ENCODE measurements at regions of chr2 and their contacts with region 1.

Region 1: GRCh38 chr2:105797298-105797819 is 52.6 kb downstream of the NCK2 start:
- DNase-seq: peak in 2 of 3 donors; percentile 38 to 43
- H3K4me3 ChIP-seq: peak overlapping the region in 1 of 3 experiments; percentile 58
- H3K4me3 Mint-ChIP-seq: peak overlapping the region in 1 of 2 donors; percentile 56
- H3K27ac ChIP-seq: peak overlapping the region; percentile 56 to 90
- H3K27ac Mint-ChIP-seq: peak overlapping the region; percentile 55 to 98 (median 83)
- H3K4me1 ChIP-seq: peaks cover 75 to 77% of the 10 kb centered on the region in 2 donors
- H3K4me1 Mint-ChIP-seq: peaks cover 85% of the 10 kb centered on the region
- H3K27me3 ChIP-seq: no peaks in the 10 kb centered on the region
- H3K27me3 Mint-ChIP-seq: no peaks in the 10 kb centered on the region
- CTCF ChIP-seq: no peak

Region 2: DNA sequence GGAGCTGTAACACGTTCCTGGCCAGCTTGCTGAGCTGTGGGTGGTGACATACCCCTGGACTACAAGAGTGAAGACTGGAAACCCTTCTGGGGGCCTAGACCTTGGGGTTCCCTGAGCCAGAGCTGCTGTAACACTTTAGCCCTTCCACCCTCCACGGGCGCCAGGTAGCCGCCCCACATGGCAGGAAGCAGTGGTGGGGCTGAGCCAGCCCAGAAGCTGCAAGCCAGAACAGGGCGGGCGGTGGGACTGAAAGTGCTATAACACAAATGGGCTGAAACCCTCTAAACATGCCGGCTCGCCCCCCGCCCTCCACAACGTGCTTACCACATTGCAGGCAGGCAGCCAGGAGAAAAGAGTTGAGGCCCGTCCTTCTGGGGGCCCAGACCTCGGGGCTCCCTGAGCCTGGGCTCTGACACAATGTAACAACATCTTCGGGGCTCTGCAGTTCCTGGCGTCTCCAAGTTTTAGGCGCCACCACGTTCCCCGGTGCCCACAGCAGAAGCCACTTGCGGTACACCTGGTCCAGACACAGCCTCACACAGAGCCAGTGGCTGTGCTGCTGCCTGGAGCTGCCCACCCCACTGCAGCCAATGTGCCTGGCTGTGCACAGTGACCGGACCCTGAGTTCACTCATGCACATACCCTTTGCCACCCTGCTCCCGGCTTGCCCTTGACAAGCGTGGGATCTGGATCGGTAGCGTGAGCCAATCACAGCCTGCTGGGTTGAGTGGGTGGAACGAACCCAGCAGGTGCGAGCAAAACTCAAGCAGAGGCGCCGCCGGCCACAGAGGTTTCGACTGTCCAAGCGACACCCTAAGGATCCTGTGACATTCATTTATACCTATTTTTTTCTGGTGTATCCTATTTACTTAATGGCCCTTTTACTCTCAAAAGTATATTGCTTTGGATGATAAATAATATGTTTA is 271.1 kb before region 1 on chr2:
- intact Hi-C with region 1: no loop called
- DNase-seq: no peak
- H3K4me3 ChIP-seq: no peak overlapping the region
- H3K4me3 Mint-ChIP-seq: no peak overlapping the region
- H3K27ac ChIP-seq: no peak overlapping the region
- H3K27ac Mint-ChIP-seq: no peak overlapping the region
- H3K4me1 ChIP-seq: no peaks in the 10 kb centered on the region
- H3K4me1 Mint-ChIP-seq: no peaks in the 10 kb centered on the region
- H3K27me3 ChIP-seq: no peaks in the 10 kb centered on the region
- H3K27me3 Mint-ChIP-seq: peaks cover 1 to 3% (median 1%) of the 10 kb centered on the region in 3 donors
- CTCF ChIP-seq: no peak

Region 3: DNA sequence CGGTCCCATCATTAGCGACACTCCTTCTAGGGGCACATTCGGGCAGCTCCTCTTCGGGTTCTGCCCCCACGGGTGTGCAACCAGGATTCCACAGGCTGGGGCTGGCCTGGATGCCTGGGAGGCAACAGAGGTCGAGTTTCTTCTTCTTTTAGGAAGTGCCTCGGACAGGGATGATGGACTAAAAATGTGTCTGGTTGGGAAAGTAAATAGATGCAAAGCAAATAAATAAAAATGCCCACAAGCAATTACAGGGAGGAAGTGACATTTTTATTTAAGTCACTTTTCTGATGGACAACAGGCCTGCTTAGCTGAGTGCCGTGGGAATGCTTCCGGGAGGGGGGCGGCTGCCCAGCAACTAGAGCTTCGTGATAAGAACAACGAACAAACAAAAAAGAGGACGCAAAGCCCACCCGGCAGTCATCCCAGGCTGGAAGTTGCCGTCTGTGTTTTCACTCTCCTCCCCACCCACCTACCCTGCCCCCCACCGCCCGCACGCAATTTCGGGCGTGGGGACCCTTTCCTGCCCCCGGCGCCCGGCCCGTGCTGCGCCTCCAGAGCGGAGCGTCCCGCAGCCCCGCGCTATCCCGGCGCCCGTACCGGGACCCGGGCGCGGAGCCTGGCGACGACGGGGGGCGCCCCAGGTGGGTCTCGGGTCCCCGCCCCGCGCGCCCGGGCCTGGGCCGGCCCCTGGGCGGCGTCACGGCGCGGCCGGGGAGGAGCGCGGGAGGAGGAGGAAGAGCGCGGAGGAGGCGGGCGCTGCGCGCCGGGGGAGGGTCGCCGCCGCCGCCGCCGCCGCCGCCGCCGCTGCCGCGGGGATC is 53.1 kb before region 1 on chr2:
- intact Hi-C with region 1: loop called in 1 of 2 experiments (anchors 5 kb)
- DNase-seq: peak; percentile 28 to 43 (median 32)
- H3K4me3 ChIP-seq: peak overlapping the region; percentile 47 to 74 (median 56)
- H3K4me3 Mint-ChIP-seq: peak overlapping the region; percentile 90 to 94
- H3K27ac ChIP-seq: peak overlapping the region in 1 of 2 donors; percentile 65
- H3K27ac Mint-ChIP-seq: peak overlapping the region; percentile 41 to 88 (median 72)
- H3K4me1 ChIP-seq: peaks cover 20 to 29% of the 10 kb centered on the region in 2 donors
- H3K4me1 Mint-ChIP-seq: peaks cover 33% of the 10 kb centered on the region
- H3K27me3 ChIP-seq: no peaks in the 10 kb centered on the region
- H3K27me3 Mint-ChIP-seq: peaks cover 3 to 5% (median 3%) of the 10 kb centered on the region in 3 donors
- CTCF ChIP-seq: no peak

Region 4: DNA sequence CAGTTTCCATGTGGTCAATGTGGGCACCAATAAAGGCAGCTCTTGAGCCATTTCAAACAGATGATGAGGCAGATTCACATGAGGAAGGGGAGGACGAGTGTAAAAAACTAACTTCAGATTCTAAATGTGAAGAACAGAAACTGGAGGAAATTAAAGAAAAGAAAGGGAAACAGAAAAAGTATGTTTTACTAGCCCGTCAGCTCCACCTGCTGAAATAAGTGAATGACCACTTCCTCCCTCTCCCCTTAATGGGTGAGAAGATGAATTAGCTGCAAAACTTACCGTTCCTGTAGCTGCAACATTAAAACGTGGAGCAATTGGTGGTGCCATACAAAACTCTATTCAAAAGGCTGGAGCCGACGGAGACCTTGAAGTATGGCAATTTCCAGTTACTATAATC is 193.3 kb after region 1 on chr2:
- intact Hi-C with region 1: no loop called
- DNase-seq: no peak
- H3K4me3 ChIP-seq: no peak overlapping the region
- H3K4me3 Mint-ChIP-seq: no peak overlapping the region
- H3K27ac ChIP-seq: no peak overlapping the region
- H3K27ac Mint-ChIP-seq: no peak overlapping the region
- H3K4me1 ChIP-seq: no peaks in the 10 kb centered on the region
- H3K4me1 Mint-ChIP-seq: peaks cover 2% of the 10 kb centered on the region
- H3K27me3 ChIP-seq: no peaks in the 10 kb centered on the region
- H3K27me3 Mint-ChIP-seq: no peaks in the 10 kb centered on the region
- CTCF ChIP-seq: no peak